Endothelial cell of umbilical vein (primary cell): ENCODE measurements at regions of chr12 and their contacts with region 1.

Region 1: GRCh38 chr12:64551698-64552097 is 58.6 kb upstream of the RASSF3 start:
- DNase-seq: no peak
- H3K4me3 ChIP-seq: no peak overlapping the region
- H3K27ac ChIP-seq: no peak overlapping the region
- H3K4me1 ChIP-seq: no peaks in the 10 kb centered on the region
- H3K27me3 ChIP-seq: peaks cover 0 to 2% of the 10 kb centered on the region in 2 experiments
- CTCF ChIP-seq: no peak
- POLR2A ChIP-seq: no peak

Region 2: DNA sequence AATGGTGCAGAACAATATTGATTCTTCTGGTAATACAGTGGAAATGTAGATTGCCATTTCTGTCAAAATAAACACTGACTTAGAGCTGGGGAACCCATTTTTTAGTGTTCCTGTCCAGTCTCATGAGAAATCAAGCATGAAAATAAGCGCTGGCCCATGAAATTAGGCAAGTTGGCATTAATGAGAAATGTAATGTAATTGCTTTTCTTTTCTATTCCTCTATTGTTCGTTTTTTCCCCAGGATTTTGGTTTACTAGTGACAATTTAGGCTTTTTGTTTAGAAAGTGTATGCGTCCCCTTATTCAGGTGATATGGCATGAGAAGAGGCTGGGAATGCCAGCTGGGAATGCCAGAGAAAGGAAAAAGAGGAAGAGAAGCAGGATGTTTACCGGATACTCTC is 265.2 kb before region 1 on chr12:
- CTCF ChIA-PET with region 1: no interaction called
- POLR2A ChIA-PET with region 1: no interaction called
- dilution Hi-C with region 1: no loop called
- intact Hi-C with region 1: no loop called
- DNase-seq: no peak
- H3K4me3 ChIP-seq: no peak overlapping the region
- H3K27ac ChIP-seq: no peak overlapping the region
- H3K4me1 ChIP-seq: no peaks in the 10 kb centered on the region
- H3K27me3 ChIP-seq: no peaks in the 10 kb centered on the region
- CTCF ChIP-seq: no peak
- POLR2A ChIP-seq: no peak

Region 3: GRCh38 chr12:64583771-64584421 is 32.2 kb after region 1 on chr12:
- CTCF ChIA-PET with region 1: interaction called, 10 read pairs
- POLR2A ChIA-PET with region 1: no interaction called
- dilution Hi-C with region 1: no loop called
- intact Hi-C with region 1: no loop called
- DNase-seq: peak; percentile 90
- H3K4me3 ChIP-seq: peak overlapping the region in 1 of 3 experiments; percentile 24
- H3K27ac ChIP-seq: peak overlapping the region; percentile 42
- H3K4me1 ChIP-seq: peaks cover 17% of the 10 kb centered on the region
- H3K27me3 ChIP-seq: peaks cover 0 to 2% of the 10 kb centered on the region in 2 experiments
- CTCF ChIP-seq: no peak
- POLR2A ChIP-seq: no peak

Region 4: GRCh38 chr12:64625243-64626077 is 73.8 kb after region 1 on chr12:
- CTCF ChIA-PET with region 1: interaction called, 9 read pairs
- POLR2A ChIA-PET with region 1: no interaction called
- dilution Hi-C with region 1: no loop called
- intact Hi-C with region 1: loop called (anchors 1 kb)
- DNase-seq: peak; percentile 96
- H3K4me3 ChIP-seq: peak overlapping the region in 2 of 3 experiments; percentile 11 to 39
- H3K27ac ChIP-seq: peak overlapping the region; percentile 89
- H3K4me1 ChIP-seq: peaks cover 65% of the 10 kb centered on the region
- H3K27me3 ChIP-seq: no peaks in the 10 kb centered on the region
- CTCF ChIP-seq: no peak
- POLR2A ChIP-seq: peak; percentile 36

Region 5: GRCh38 chr12:64701283-64701682 is 149.6 kb after region 1 on chr12:
- CTCF ChIA-PET with region 1: interaction called, 217 read pairs
- POLR2A ChIA-PET with region 1: interaction called, 3 read pairs
- dilution Hi-C with region 1: no loop called
- intact Hi-C with region 1: loop called (anchors 1 kb)
- DNase-seq: peak; percentile 21
- H3K4me3 ChIP-seq: no peak overlapping the region
- H3K27ac ChIP-seq: no peak overlapping the region
- H3K4me1 ChIP-seq: peaks cover 4% of the 10 kb centered on the region
- H3K27me3 ChIP-seq: no peaks in the 10 kb centered on the region
- CTCF ChIP-seq: no peak
- POLR2A ChIP-seq: no peak

Region 6: DNA sequence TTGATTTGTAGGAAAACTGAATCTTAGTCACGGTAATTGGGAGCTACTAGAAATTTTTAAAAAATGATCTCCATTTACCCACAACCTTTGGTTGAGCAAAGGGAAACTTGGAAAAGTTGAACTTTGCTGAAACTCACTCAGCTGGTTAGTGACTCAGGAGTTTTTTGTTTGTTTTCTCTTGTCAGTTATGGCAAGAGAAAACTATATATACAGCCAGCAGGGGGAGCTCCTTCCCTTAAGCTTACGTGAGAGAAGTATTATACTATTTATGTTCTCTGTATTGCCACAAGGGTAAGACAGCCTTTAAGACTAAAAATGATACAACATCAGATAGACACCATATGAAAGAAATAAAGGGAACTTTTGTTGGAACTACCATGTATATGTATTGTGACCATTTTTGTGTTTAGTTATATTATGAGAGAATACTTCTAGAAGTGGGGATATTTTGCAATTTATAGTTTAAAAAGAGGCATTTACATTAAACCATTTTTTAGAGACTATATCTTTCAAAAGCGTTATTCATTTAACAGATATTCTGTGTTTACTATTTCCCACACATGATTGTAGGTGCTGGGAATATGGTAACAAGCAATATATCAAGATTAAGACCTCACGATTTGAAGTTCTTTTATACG is 244.6 kb after region 1 on chr12:
- CTCF ChIA-PET with region 1: interaction called, 16 read pairs
- POLR2A ChIA-PET with region 1: no interaction called
- dilution Hi-C with region 1: no loop called
- intact Hi-C with region 1: no loop called
- DNase-seq: peak; percentile 93
- H3K4me3 ChIP-seq: no peak overlapping the region
- H3K27ac ChIP-seq: no peak overlapping the region
- H3K4me1 ChIP-seq: no peaks in the 10 kb centered on the region
- H3K27me3 ChIP-seq: no peaks in the 10 kb centered on the region
- CTCF ChIP-seq: peak; percentile 63 to 68
- POLR2A ChIP-seq: no peak